WTC11 (cell line): ENCODE measurements at regions of chr2 and their contacts with region 1.

Region 1: DNA sequence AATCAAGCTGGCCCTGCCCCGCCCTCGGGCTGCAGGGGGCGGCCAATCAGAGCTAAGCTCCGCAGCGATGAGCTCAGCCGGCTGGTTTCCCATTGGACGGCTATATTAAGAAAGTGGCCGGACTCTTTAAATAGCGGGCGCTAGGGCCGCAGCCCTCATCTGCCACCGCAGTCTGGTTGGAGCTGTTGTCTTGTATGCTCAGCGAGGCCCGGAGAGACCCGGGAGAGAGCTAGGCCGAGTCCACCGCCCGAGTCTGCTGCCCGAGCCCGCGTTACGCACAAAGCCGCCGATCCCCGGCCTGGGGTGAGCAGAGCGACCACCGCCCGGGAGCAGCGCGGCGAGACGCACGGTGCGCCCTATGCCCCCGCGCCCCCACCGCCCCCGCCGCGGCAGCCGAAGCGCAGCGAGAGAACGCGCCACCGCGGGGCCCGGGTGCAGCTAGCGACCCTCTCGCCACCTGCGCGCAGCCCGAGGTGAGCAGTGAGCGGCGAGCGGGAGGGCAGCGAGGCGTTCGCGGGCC is at the start of gene RHOB:
- DNase-seq: peak; percentile 95
- ATAC-seq: peak; percentile 81
- H3K4me3 Mint-ChIP-seq: peak within 1 kb of the TSS; percentile 82
- H3K27ac Mint-ChIP-seq: no peak within 1 kb of the TSS
- H3K4me1 Mint-ChIP-seq: peaks cover 35% of the 10 kb centered on the region
- H3K27me3 Mint-ChIP-seq: peaks cover 60% of the 10 kb centered on the region
- CTCF ChIP-seq: no peak
- total RNA-seq, gene RHOB: 20.4 to 23.2 TPM (median 22.7 TPM) in 3 replicates

Region 2: DNA sequence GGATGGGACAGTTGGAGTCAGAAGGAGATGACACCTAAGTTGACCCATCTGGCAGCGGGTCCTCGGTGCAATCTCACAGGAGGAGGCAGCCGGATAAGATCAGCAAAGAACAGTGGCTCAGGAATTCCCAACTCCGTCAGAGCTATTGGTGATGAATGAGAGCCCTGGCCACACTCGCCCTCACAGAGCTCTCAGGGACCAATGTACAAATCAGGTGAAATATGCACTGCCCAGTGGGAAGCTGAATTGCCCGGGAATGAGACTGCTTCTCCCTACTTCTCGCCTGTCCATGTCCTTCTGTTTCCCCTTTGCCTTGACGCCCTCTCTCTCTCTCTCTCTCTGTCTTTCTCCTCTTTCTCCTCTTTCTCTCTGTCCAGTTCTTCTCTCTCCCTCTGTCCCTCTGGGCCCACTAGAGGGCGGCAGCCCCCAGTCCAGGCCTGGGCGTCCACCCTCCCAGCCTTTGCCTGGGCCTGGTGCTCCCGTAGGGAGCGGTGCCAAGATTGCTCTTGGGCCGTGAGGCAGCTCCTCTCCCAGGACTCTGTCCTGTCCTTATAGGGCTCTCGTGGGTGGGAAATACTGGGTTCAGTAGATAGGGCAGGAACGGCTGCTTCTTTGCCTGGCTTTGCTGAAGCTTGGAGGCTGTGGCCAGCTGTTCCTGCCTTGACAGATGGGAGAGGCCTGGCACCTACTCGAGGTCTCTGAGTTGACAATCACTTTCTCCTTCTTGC is 68.0 kb before region 1 on chr2:
- CTCF ChIA-PET with region 1: interaction called, 11 read pairs
- POLR2A ChIA-PET with region 1: interaction called, 7 read pairs
- DNase-seq: peak; percentile 81
- ATAC-seq: peak; percentile 97
- H3K4me3 Mint-ChIP-seq: no peak overlapping the region
- H3K27ac Mint-ChIP-seq: no peak overlapping the region
- H3K4me1 Mint-ChIP-seq: peaks cover 27% of the 10 kb centered on the region
- H3K27me3 Mint-ChIP-seq: peaks cover 4% of the 10 kb centered on the region; the same call in 1 of the 2 replicates
- CTCF ChIP-seq: peak; percentile 64

Region 3: GRCh38 chr2:20424300-20425290 is 22.4 kb before region 1 on chr2:
- CTCF ChIA-PET with region 1: interaction called, 13 read pairs
- POLR2A ChIA-PET with region 1: interaction called, 19 read pairs
- DNase-seq: no peak
- ATAC-seq: no peak
- H3K4me3 Mint-ChIP-seq: no peak overlapping the region
- H3K27ac Mint-ChIP-seq: no peak overlapping the region
- H3K4me1 Mint-ChIP-seq: peaks cover 9% of the 10 kb centered on the region
- H3K27me3 Mint-ChIP-seq: no peaks in the 10 kb centered on the region
- CTCF ChIP-seq: no peak

Region 4: GRCh38 chr2:20525041-20526035 is 78.4 kb after region 1 on chr2:
- CTCF ChIA-PET with region 1: interaction called, 3 read pairs
- POLR2A ChIA-PET with region 1: interaction called, 17 read pairs
- DNase-seq: no peak
- ATAC-seq: no peak; the same call in 1 of the 2 replicates
- H3K4me3 Mint-ChIP-seq: no peak overlapping the region
- H3K27ac Mint-ChIP-seq: no peak overlapping the region
- H3K4me1 Mint-ChIP-seq: peaks cover 8% of the 10 kb centered on the region
- H3K27me3 Mint-ChIP-seq: no peaks in the 10 kb centered on the region; the same call in 1 of the 2 replicates
- CTCF ChIP-seq: no peak

Region 5: GRCh38 chr2:20584637-20585321 is 137.8 kb after region 1 on chr2:
- CTCF ChIA-PET with region 1: interaction called, 3 read pairs
- POLR2A ChIA-PET with region 1: interaction called, 16 read pairs
- DNase-seq: peak; percentile 63
- ATAC-seq: peak; percentile 96
- H3K4me3 Mint-ChIP-seq: no peak overlapping the region
- H3K27ac Mint-ChIP-seq: peak overlapping the region; percentile 60
- H3K4me1 Mint-ChIP-seq: peaks cover 21% of the 10 kb centered on the region
- H3K27me3 Mint-ChIP-seq: peaks cover 3% of the 10 kb centered on the region
- CTCF ChIP-seq: no peak

Region 6: DNA sequence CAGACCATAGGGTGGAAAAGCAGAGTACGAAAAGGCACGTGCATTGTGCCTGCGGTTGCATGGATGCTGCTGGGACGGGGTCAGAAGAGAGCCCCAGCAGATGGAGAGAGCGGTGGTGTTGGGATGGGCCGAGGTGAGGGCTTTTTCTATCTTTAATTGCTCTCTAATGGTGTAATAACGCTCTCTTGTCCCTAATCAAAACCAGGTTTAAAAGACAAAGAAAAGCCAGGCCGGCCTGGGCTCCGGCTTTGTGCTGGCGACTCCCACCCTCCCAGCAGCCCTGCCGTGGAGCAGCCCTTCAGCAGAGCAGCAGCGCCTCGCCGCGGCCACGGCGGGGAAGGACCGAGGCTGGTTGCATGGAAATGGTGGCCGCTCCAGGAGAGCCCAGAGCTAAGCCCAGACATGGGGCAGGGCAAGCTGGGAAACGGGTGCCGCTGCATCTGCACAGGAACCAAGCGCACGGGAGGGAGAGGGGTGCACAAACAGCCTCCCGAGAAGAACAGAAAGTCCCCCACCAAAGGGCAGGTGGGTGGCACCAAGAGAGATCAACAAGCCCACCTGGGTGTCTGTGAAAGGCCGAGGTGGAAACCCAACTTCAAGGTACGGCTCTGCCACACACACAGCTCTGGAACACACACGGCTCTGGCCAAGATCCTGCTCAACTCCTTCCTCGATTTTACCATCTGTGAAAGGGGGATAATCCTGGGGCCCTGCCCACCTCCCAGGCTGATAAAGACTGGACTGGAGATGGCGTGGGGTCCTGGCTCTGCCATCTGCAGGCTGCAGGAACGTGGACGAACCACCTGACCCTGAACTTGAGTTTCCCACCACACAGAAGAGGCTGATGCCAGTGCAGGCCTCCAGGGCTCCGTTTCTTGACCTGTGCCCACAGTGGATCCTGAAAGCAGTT is 189.0 kb after region 1 on chr2:
- CTCF ChIA-PET with region 1: interaction called, 118 read pairs
- POLR2A ChIA-PET with region 1: interaction called, 42 read pairs
- DNase-seq: peak; percentile 93
- ATAC-seq: peak; percentile 96
- H3K4me3 Mint-ChIP-seq: no peak overlapping the region
- H3K27ac Mint-ChIP-seq: no peak overlapping the region
- H3K4me1 Mint-ChIP-seq: peaks cover 33% of the 10 kb centered on the region
- H3K27me3 Mint-ChIP-seq: no peaks in the 10 kb centered on the region
- CTCF ChIP-seq: peak; percentile 75

Region 7: DNA sequence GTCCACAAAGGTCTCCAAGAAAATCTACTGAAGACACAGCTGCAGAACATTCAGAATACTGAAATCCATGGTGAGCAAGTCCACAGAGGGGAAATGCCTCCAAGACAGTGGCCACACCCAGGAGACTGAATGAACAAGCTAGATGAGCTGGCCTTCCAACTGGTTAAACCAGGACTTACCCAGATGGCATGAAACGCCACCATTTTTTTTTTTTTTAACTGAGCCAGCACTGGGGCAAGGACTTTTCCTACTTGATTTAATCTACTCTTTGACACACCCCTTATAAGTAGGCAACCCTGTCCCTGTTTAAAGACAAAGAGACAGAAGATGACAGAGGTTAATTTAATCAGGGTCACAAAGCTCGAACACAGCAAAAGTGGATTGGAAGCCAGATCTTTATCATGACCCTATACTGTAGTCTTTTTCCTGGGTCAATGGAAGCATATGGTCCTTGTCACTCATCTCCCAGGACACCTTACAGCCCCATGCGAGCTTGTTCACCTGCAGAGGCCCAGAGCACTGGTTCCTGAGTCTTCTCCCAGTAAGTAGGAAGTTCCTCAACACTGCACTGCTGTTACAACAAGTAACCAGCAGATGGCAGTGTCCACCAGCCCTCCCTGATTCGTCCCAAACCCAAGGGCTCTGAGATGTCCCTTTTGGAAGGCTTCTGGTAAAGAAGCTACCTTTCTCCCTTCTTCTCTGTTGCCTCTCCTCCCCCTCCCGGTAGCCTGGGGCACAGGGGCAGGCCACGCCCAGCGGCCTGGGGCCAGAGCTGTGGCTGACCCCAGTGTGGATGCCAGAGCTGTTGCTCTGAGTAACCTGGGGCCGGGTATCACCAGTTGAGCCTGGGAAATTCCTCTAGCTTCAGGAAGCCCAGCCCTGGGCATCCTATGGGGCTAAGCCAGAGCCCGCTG is 214.3 kb after region 1 on chr2:
- CTCF ChIA-PET with region 1: interaction called, 16 read pairs
- POLR2A ChIA-PET with region 1: interaction called, 4 read pairs
- DNase-seq: peak; percentile 76
- ATAC-seq: peak; percentile 70
- H3K4me3 Mint-ChIP-seq: no peak overlapping the region
- H3K27ac Mint-ChIP-seq: no peak overlapping the region
- H3K4me1 Mint-ChIP-seq: peaks cover 21% of the 10 kb centered on the region
- H3K27me3 Mint-ChIP-seq: peaks cover 67% of the 10 kb centered on the region
- CTCF ChIP-seq: peak; percentile 92